Dorsolateral prefrontal cortex (tissue), 120 donors: ENCODE measurements at regions of chr4 and their contacts with region 1.

Region 1: DNA sequence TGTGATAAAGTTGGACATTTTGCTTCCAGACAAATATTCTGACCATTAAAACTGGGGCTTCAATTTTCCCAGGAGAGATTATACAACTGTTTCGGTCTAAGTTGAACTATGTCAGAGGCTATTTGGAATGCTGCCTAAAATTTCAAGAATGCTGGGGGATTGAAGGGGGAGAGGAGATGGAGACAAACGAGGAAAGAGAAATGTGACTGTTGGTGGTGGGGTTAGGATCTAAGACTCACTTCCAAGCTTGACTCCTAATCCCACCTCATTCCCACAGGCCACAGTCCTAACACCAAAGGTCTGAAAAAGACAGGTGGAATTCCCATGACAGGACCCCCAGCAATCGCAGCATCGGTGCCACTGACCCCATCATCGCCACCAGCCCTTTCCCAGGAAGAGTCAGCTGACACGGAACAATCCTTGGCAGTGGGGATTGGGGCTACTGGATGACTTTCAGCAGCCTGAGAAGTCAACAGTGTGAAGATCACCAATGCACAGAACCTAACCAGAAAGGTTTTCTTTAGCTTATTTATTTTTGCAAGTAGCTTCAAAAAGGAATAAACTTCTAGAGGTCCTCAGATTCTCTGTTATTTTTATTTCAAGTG is 74.0 kb upstream of the PRSS48 start:
- DNase-seq: peak in 1 of 10 donors; percentile 10
- H3K4me3 ChIP-seq: peak overlapping the region in 2 of 59 donors; percentile 9 to 21
- H3K27ac ChIP-seq: peak overlapping the region in 48 of 59 donors; percentile 1 to 95 (median 72)
- H3K27me3 ChIP-seq: no peaks in the 10 kb centered on the region
- CTCF ChIP-seq: no peak

Region 2: DNA sequence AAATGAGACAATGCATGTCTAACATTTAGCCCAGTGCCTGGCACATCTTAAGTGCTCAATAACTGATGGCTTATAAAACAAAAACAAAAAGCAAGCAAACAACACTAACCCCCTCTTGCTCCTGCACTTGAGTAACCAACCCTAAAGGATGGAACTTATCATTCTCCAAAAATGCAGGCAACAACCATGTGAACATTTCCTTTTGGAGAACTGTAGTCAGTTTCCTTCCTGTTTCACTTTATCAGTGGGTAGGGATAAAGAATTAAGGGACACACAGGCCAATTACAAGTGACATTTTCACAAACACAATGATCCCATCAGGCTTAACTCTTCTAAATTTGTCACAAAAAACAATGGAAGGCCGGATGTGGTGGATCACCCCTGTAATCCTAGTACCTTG is 73.2 kb before region 1 on chr4:
- intact Hi-C with region 1: loop called in 1 of 2 experiments (anchors 10 kb)
- DNase-seq: no peak
- H3K4me3 ChIP-seq: no peak overlapping the region
- H3K27ac ChIP-seq: no peak overlapping the region
- H3K27me3 ChIP-seq: no peaks in the 10 kb centered on the region
- CTCF ChIP-seq: no peak

Region 3: DNA sequence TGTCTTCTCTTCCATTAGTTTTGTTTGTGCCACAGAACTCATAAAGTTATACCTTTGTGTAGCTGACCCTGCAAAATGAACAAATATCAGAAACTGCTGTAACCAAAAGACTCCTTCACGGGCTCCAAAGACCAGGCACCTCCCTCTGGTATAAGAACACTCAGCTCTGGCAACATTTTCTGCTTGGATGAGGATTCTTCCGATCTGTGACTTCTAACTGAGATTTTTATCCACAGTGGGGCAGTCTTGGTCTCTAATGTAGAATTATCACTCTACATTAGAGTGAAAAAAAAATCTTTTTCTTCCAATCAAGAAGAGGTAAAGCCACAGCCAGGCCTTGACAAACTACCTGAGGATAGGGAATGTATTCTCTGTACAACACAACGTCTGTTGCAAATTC is 35.5 kb after region 1 on chr4:
- intact Hi-C with region 1: loop called in 1 of 2 experiments (anchors 5 kb)
- DNase-seq: no peak
- H3K4me3 ChIP-seq: no peak overlapping the region
- H3K27ac ChIP-seq: peak overlapping the region in 44 of 59 donors; percentile 1 to 70 (median 48)
- H3K27me3 ChIP-seq: no peaks in the 10 kb centered on the region
- CTCF ChIP-seq: peak in 55 of 56 donors; percentile 14 to 71 (median 54)